OCI-LY7 (cell line): ENCODE measurements at regions of chr4 and their contacts with region 1.

Region 1: GRCh38 chr4:145618932-145619638 is at the start of gene MMAA:
- DNase-seq: peak; percentile 95
- H3K4me3 ChIP-seq: peak within 1 kb of the TSS; percentile 97
- H3K27ac ChIP-seq: peak within 1 kb of the TSS; percentile 92
- H3K4me1 ChIP-seq: peaks cover 24% of the 10 kb centered on the region
- CTCF ChIP-seq: peak; percentile 81
- total RNA-seq, gene MMAA: 1.6 and 2.5 TPM in 2 replicates

Region 2: GRCh38 chr4:145097821-145098674 is 521.0 kb before region 1 on chr4 and contains the starts of genes ABCE1 and ANAPC10:
- CTCF ChIA-PET with region 1: no interaction called
- POLR2A ChIA-PET with region 1: no interaction called
- intact Hi-C with region 1: loop called (anchors 2 kb)
- DNase-seq: peak; percentile 99
- H3K4me3 ChIP-seq: peak within 1 kb of the TSS; percentile 79
- H3K27ac ChIP-seq: peak within 1 kb of the TSS; percentile 80
- H3K4me1 ChIP-seq: peaks cover 52% of the 10 kb centered on the region
- CTCF ChIP-seq: peak; percentile 50
- total RNA-seq, gene ABCE1: 108 and 119 TPM in 2 replicates
- total RNA-seq, gene ANAPC10: 34.1 and 46.1 TPM in 2 replicates

Region 3: DNA sequence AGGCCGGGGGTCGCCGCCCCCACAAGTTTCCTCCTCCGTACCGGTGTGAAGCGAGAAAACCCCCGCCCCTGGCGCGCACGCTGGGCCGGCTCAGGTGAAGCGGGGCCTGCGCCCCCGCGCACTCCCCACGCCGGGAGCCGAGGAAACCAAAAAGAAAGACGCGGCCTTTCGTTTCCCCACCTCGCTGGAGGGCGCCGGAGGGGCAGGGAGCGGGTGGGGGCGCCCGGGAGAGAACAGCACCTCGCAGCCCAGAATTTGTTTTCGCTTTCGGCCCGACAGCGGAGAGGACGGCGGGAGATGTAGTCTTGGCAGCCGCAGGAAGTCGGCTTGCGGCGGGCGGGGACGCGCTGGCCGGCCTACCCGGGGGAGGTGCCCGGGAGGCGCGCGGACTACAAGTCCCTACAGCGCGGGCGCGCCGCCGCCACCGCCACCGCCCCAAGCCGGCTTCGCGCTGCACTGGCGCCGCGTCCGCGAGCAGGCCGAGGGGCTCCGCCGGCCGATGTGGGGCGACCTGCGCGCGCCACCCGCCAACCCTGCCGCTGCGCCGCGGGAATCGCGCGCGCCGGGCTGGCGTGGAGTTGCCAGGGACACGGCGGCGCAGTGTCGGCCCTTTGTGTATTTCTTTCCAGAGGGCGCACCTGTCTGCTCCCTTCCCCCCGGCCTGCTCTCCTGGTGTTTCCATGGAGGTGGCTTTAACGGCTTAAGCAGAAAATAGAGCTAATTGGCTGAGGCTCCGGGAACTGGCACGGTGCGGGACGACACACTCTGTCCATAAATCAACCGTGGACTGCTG is 438.6 kb before region 1 on chr4 and contains the start of gene OTUD4:
- CTCF ChIA-PET with region 1: no interaction called
- POLR2A ChIA-PET with region 1: interaction called, 5 read pairs
- intact Hi-C with region 1: loop called (anchors 1 kb)
- DNase-seq: peak; percentile 97
- H3K4me3 ChIP-seq: peak within 1 kb of the TSS; percentile 97
- H3K27ac ChIP-seq: peak within 1 kb of the TSS; percentile 82
- H3K4me1 ChIP-seq: peaks cover 34% of the 10 kb centered on the region
- CTCF ChIP-seq: peak; percentile 59
- total RNA-seq, gene OTUD4: 17.3 and 23.4 TPM in 2 replicates

Region 4: GRCh38 chr4:145234091-145234706 is 384.9 kb before region 1 on chr4:
- CTCF ChIA-PET with region 1: interaction called, 3 read pairs
- POLR2A ChIA-PET with region 1: interaction called, 4 read pairs
- intact Hi-C with region 1: loop called (anchors 1 kb)
- DNase-seq: peak; percentile 88
- H3K4me3 ChIP-seq: no peak overlapping the region
- H3K27ac ChIP-seq: no peak overlapping the region
- H3K4me1 ChIP-seq: peaks cover 11% of the 10 kb centered on the region
- CTCF ChIP-seq: peak; percentile 100

Region 5: DNA sequence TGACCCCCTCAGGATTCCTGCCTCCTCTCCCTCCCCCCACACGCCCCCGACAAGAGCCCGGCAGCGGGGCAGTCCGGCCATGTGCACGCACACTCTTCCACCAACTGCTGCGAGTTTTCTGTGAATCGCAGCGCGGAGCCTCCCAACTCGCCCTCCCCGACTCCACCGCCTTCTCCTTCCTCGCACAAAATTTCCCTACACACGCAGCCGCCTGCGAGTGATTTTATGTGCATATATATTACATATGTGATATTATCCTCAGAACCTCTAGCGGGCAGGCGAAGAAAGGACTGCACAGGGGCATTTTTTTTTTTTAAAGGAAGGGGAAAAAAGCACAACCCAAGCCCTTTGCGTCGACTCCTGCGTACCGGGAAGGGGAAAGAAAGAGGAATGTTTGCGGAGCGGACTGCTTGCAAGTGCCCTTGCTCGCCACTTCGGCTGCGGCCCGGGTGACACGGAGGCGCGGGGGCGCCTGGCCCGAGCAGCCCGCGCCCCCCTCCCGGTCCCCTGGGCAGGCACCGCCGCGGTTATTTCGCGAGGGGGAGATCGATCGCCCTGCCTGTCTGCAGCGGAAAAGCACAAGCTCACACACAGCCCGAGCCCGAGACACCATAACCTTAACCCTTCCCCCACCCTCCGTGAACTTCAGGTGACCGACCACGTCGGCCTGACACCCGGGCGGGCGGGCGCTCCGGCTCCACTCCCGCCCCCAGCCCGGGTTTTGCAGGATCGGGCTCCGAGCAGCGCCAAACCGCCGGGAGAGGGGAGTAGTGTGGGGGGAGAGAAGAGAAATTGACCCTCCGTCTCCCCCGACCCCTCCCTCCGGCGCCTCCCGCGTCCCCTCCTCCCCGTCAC is 317.3 kb after region 1 on chr4:
- CTCF ChIA-PET with region 1: no interaction called
- POLR2A ChIA-PET with region 1: interaction called, 5 read pairs
- intact Hi-C with region 1: loop called (anchors 2 kb)
- DNase-seq: peak; percentile 89
- H3K4me3 ChIP-seq: peak overlapping the region; percentile 87
- H3K27ac ChIP-seq: peak overlapping the region; percentile 92
- H3K4me1 ChIP-seq: peaks cover 58% of the 10 kb centered on the region
- CTCF ChIP-seq: peak; percentile 67